Activated CD4-positive, alpha-beta memory T cell treated with anti-CD3 and anti-CD28 coated beads for 36 hours (primary cell): ENCODE measurements at regions of chr12 and their contacts with region 1.

Region 1: GRCh38 chr12:3073438-3074250 is 3.5 kb upstream of the TSPAN9 start:
- DNase-seq: peak; percentile 89
- H3K4me3 Mint-ChIP-seq: no peak overlapping the region
- H3K27ac Mint-ChIP-seq: no peak overlapping the region
- H3K4me1 Mint-ChIP-seq: peaks cover 4% of the 10 kb centered on the region
- H3K27me3 Mint-ChIP-seq: peaks cover 9% of the 10 kb centered on the region

Region 2: DNA sequence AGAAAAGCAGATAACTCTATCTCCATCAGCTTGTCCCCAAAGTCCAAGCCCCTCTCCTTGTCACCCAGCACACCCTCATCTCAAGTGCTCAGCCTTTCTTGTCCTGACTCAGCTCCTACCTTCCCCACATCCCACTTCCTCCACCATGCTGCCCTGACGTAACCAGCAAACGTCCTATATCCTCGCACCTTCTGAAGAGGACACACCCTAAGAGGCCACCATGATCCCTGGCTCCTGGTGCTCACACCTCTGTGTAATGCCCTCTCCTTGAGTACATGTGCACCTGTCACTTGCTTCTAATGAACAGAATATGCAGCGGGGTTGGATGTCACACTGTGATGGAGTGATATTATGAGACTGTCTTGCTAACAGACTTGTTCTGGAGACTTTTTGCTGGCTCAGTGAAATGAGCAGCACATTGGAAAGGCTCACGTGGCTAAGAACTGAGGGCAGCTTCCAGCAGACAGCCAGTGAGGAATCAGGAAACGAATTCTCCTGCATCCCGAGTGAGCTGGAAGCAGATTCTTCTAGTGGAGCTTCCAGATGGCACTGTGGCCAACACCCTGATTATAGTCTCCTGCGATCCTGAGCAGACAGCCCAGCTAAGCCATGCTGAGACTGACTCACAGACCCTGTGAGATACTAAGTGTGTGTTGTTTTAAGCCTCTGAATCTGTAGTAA is 12.7 kb before region 1 on chr12:
- CTCF ChIA-PET with region 1: interaction called, 18 read pairs
- POLR2A ChIA-PET with region 1: no interaction called
- intact Hi-C with region 1: no loop called
- DNase-seq: no peak
- H3K4me3 Mint-ChIP-seq: no peak overlapping the region
- H3K27ac Mint-ChIP-seq: no peak overlapping the region
- H3K4me1 Mint-ChIP-seq: no peaks in the 10 kb centered on the region
- H3K27me3 Mint-ChIP-seq: peaks cover 35% of the 10 kb centered on the region

Region 3: DNA sequence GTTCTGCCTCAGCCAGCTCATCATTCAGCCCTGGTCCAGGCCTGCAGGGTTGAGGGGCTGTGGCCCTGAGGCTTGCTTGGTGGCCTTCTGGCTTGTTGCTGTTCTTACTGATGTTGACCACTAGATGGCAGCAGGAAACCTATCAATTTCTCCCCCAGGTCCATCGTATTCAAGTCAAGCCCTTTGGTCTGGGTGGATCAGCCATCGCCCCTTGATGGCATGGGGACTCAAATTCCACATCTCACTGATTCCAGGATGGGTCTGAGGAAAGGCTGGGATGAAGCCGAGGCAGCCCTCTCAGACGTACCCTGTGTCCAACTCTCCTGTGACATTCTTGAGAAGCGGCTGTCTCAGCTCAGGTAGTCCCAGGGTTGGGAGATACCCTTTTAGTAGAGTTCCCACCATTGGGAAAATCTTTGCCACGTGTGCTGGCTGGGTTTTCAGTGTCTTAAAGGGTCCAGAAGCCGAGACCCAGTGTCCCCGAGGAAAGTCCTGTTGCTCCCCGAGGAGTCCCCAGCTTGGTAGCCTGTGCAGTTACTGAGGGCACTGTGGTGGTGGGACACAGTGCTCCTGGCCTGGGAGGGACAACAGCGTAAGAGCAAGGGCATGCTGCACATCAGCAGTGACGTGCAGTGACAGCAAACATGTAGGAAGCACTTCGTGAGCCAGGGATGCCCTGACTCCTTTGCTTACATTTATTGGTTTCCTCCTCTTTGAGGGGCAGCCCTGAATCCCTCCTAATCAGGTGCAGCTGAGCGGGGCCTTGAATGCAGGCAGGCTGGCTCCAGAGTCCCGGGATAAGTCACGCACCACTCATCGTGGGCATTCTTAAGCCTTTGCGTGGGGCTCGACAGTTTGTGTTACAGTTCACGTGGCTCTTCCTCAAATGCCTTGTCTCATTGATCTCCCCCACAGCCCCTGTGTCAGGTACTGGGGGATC is 62.1 kb after region 1 on chr12:
- CTCF ChIA-PET with region 1: interaction called, 3 read pairs
- POLR2A ChIA-PET with region 1: no interaction called
- intact Hi-C with region 1: loop called (anchors 5 kb)
- DNase-seq: peak; percentile 44
- H3K4me3 Mint-ChIP-seq: no peak overlapping the region
- H3K27ac Mint-ChIP-seq: no peak overlapping the region
- H3K4me1 Mint-ChIP-seq: no peaks in the 10 kb centered on the region
- H3K27me3 Mint-ChIP-seq: peaks cover 34% of the 10 kb centered on the region

Region 4: DNA sequence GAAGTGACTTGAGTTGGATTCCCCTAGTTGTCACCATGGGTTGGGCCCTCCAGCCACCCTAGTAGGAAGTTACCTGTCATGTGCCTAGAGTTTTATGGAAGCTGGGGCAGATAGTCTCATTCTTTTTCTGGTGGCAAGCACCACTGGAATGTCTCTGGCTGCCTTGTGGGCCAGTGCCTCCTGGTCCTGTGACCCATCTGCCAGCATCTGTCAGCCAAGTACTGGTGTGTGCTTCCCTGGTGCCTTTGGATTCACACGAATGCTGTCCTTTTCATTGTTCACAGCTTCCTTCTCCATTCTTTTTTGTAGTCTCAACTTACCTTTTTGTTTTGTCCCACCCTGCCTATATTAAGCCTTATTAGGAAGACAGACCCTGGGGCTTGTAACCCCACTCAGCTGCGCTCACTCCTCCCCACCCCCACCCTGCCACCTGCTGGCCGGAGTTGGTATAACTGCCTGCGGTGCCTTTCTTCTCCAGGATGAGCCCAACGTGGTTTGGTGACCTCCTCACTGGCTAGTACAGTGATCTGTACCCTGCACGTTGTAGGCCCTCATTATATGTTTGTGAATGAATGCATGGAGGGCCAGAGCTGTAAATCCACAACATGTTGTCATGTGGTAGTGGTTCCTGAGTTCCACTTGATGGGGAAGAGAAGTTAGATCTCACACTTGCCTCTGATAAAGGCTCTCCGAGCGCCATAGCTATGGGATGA is 129.2 kb after region 1 on chr12:
- CTCF ChIA-PET with region 1: interaction called, 12 read pairs
- POLR2A ChIA-PET with region 1: no interaction called
- intact Hi-C with region 1: loop called (anchors 1 kb)
- DNase-seq: peak; percentile 74
- H3K4me3 Mint-ChIP-seq: no peak overlapping the region
- H3K27ac Mint-ChIP-seq: no peak overlapping the region
- H3K4me1 Mint-ChIP-seq: peaks cover 9% of the 10 kb centered on the region
- H3K27me3 Mint-ChIP-seq: peaks cover 34% of the 10 kb centered on the region

Region 5: GRCh38 chr12:3350422-3350821 is 276.8 kb after region 1 on chr12:
- CTCF ChIA-PET with region 1: no interaction called
- POLR2A ChIA-PET with region 1: no interaction called
- intact Hi-C with region 1: no loop called
- DNase-seq: no peak
- H3K4me3 Mint-ChIP-seq: no peak overlapping the region
- H3K27ac Mint-ChIP-seq: no peak overlapping the region
- H3K4me1 Mint-ChIP-seq: no peaks in the 10 kb centered on the region
- H3K27me3 Mint-ChIP-seq: no peaks in the 10 kb centered on the region